Activated naive CD8-positive, alpha-beta T cell treated with anti-CD3 and anti-CD28 coated beads, Interleukin-2, amount 10 ng/mL, durations not matched to agents 7 days and 5 days (primary cell): ENCODE measurements at regions of chr9 and their contacts with region 1.

Region 1: DNA sequence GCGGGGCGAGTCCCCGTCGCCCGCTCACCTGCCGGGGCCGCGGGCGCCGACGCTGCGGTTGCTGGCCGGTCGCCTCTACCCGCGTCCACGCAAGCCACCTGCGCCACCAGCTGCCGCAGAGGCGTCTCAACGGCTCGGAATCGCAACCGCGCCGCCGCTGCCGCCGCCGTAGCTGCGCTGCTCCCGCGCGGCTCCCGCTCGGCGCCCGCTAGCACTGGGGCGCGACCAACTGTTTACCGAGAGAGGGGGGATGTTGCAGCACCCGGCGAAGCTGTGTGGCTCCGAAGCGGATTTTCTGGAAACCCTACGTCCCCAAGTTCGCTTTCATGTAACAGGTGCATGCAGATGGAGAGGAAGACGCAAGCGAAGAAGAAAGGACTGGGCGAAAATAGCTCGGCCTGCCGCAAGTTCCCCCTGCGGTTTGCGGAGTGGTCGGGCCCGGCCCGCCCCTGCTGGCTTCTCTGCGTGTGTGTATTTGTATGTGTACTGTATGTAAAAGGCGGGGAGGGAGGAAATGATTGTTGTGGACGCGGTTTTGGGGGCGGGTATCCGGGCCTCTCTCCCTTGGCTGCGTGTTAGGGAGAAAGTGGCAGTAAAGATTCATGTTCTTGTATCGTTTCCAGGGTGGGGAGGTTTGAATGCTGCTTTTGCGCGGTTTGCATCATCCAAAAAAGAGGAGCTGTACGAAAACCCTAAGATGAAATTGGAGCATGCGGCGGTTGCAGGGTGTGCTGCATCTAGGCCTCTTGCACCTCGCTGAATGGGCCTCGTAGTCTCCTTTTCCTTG is at the start of gene PSIP1:
- DNase-seq: peak; percentile 92
- ATAC-seq: peak; percentile 79
- H3K4me3 Mint-ChIP-seq: peak within 1 kb of the TSS; percentile 91
- H3K27ac Mint-ChIP-seq: peak within 1 kb of the TSS; percentile 99
- H3K4me1 Mint-ChIP-seq: peaks cover 40% of the 10 kb centered on the region
- H3K27me3 Mint-ChIP-seq: no peaks in the 10 kb centered on the region
- total RNA-seq, gene PSIP1: 159 to 160 TPM

Region 2: DNA sequence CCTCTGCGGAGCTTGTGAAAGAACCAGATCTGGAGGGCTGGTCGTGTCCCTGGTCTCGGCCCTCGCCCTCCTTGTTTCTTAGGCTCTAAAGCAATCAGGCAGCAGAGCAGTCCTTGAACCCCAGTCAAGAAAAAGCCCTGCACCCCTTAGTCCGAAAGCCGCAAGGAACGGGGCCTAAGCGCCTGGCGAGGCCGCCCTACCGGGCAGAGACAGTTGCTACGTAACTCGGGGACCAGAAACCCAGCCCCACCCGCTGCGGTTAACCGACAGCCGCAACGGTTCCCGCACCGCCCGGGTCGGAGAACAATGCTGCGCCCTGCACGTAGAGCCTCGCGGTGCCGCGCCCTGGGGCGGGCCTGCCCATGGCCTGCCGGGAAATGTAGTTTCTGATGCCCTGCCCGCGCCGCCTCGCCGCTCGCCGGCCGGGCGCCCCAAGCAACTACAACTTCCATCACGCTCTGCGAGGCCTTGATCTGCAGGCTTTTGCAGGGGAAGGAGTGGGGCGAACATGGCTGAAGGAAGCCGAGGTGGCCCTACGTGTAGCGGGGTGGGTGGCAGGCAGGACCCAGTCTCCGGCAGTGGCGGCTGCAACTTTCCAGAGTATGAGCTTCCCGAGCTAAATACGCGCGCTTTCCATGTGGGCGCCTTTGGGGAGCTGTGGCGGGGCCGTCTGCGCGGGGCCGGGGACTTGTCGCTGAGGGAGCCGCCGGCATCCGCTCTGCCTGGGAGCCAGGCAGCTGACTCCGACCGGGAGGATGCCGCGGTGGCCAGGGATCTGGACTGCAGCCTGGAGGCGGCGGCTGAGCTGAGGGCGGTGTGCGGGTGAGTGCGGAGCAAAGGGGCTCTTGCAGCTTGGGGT is 88.4 kb before region 1 on chr9 and contains the start of gene SNAPC3:
- POLR2A ChIA-PET with region 1: interaction called, 16 read pairs
- DNase-seq: peak; percentile 96
- ATAC-seq: peak; percentile 96
- H3K4me3 Mint-ChIP-seq: peak within 1 kb of the TSS; percentile 95
- H3K27ac Mint-ChIP-seq: peak within 1 kb of the TSS; percentile 85
- H3K4me1 Mint-ChIP-seq: peaks cover 27% of the 10 kb centered on the region
- H3K27me3 Mint-ChIP-seq: peaks cover 14% of the 10 kb centered on the region
- total RNA-seq, gene SNAPC3: 27.4 to 29.2 TPM

Region 3: GRCh38 chr9:15552636-15553527 is 41.9 kb after region 1 on chr9 and contains the start of gene CCDC171:
- POLR2A ChIA-PET with region 1: interaction called, 40 read pairs
- DNase-seq: peak; percentile 89
- ATAC-seq: peak; percentile 90
- H3K4me3 Mint-ChIP-seq: peak within 1 kb of the TSS; percentile 89
- H3K27ac Mint-ChIP-seq: peak within 1 kb of the TSS; percentile 82
- H3K4me1 Mint-ChIP-seq: peaks cover 7% of the 10 kb centered on the region
- H3K27me3 Mint-ChIP-seq: peaks cover 3% of the 10 kb centered on the region
- total RNA-seq, gene CCDC171: 1.7 to 2.7 TPM